Activated naive CD4-positive, alpha-beta T cell treated with anti-CD3 and anti-CD28 coated beads for 36 hours (primary cell): ENCODE measurements at regions of chr10 and their contacts with region 1.

Region 1: DNA sequence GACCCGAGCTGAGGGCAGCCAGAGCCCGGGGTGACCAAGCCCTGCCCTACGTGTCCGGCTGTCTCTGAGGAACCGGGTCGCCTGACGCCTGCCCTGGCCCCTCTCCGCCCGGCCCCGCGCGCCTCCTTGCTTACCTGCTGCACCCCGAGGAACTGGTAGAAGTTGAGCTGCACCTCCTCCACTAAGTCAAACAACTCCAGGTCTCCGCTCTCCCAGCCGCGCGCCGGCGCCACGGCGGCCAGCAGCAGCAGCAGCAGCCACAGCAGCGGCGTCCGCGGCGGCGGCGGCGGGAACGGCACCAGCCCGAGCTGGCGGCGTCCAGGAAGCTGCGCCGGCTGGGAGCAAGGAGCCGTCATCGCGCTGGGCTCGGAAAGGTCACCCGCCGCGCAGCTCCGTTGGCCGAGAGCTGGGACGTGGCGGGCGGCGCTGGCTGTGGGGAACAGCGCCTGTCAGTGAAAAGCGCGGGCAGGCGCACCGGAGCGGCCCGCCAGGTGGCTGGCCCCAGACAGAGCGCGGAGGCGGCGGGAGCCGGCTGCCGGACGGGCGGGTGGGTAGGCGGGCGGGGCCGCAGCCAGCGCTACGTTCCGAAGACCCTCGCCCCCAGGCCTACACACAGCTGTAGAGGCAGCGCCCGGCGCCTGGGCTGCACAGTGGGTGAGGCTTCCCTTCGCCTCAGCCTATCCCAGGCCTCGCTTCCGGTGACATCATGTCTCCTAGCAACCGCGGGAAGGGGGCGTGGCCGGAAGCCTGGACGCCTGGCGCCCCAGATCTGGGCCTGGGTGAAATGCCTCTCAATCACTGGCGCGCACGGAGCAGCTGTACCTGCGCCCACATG is at the start of gene DNAJC1:
- DNase-seq: peak; percentile 99
- H3K4me3 Mint-ChIP-seq: peak within 1 kb of the TSS; percentile 94
- H3K27ac Mint-ChIP-seq: peak within 1 kb of the TSS; percentile 84
- H3K4me1 Mint-ChIP-seq: peaks cover 34% of the 10 kb centered on the region
- H3K27me3 Mint-ChIP-seq: peaks cover 5% of the 10 kb centered on the region
- total RNA-seq, gene DNAJC1: 18.0 to 18.8 TPM

Region 2: DNA sequence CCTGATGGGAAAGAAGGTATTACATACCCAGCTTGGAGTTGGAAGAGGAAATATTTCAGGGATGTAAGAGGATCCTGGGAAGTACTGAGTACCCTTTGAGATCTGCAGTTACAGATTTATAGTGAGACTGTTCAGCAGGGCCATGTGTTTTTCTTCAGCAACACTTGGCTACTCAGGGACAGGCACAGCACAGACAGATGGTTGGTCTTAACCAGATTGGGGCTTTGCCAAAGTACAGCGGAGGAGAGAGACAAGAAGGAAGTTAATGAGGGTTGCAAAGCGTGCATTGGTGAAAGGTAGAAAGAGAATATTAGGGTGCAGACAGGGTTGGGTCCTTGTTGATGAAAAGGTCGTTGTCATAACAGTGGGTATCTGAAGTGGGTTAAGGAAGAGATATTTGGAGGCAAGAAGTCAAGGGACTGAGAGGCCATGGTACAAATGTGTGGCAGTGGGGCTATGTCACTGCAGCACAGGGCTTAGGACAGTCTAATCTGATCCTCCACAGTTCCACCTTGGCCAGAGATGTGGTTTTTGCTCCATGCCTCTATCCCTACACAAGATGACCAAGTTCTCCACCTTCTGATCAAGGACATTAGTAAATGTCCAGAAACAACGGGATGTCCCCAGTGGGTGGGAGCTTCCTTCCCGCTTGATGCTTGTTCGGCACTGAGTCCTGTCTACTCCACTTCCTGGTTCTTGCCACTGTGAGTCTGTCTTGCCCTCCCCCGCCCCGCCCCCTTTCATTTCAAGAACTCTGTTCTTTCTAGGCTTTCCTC is 19.1 kb after region 1 on chr10:
- CTCF ChIA-PET with region 1: no interaction called
- intact Hi-C with region 1: loop called (anchors 1 kb)
- DNase-seq: peak; percentile 78
- H3K4me3 Mint-ChIP-seq: peak overlapping the region; percentile 65
- H3K27ac Mint-ChIP-seq: peak overlapping the region; percentile 80
- H3K4me1 Mint-ChIP-seq: peaks cover 22% of the 10 kb centered on the region
- H3K27me3 Mint-ChIP-seq: peaks cover 3% of the 10 kb centered on the region

Region 3: GRCh38 chr10:22316285-22317120 is 313.2 kb after region 1 on chr10 and contains the start of gene COMMD3:
- CTCF ChIA-PET with region 1: no interaction called
- intact Hi-C with region 1: loop called (anchors 1 kb)
- DNase-seq: peak; percentile 80
- H3K4me3 Mint-ChIP-seq: peak within 1 kb of the TSS; percentile 91
- H3K27ac Mint-ChIP-seq: peak within 1 kb of the TSS; percentile 86
- H3K4me1 Mint-ChIP-seq: peaks cover 30% of the 10 kb centered on the region
- H3K27me3 Mint-ChIP-seq: peaks cover 18% of the 10 kb centered on the region
- total RNA-seq, gene COMMD3: 64.5 to 69.4 TPM

Region 4: GRCh38 chr10:22436884-22437619 is 433.8 kb after region 1 on chr10:
- CTCF ChIA-PET with region 1: no interaction called
- intact Hi-C with region 1: loop called (anchors 1 kb)
- DNase-seq: peak; percentile 84
- H3K4me3 Mint-ChIP-seq: peak overlapping the region; percentile 84
- H3K27ac Mint-ChIP-seq: peak overlapping the region; percentile 92
- H3K4me1 Mint-ChIP-seq: peaks cover 31% of the 10 kb centered on the region
- H3K27me3 Mint-ChIP-seq: no peaks in the 10 kb centered on the region

Region 5: GRCh38 chr10:22714479-22715289 is 711.4 kb after region 1 on chr10 and contains the start of gene PIP4K2A:
- CTCF ChIA-PET with region 1: no interaction called
- intact Hi-C with region 1: loop called (anchors 5 kb)
- DNase-seq: peak; percentile 74
- H3K4me3 Mint-ChIP-seq: peak within 1 kb of the TSS; percentile 88
- H3K27ac Mint-ChIP-seq: peak within 1 kb of the TSS; percentile 79
- H3K4me1 Mint-ChIP-seq: peaks cover 27% of the 10 kb centered on the region
- H3K27me3 Mint-ChIP-seq: no peaks in the 10 kb centered on the region
- total RNA-seq, gene PIP4K2A: 68.0 to 74.1 TPM

Region 6: GRCh38 chr10:23095404-23095965 is 1092.2 kb after region 1 on chr10 and contains the start of gene MSRB2:
- CTCF ChIA-PET with region 1: no interaction called
- intact Hi-C with region 1: loop called (anchors 1 kb)
- DNase-seq: peak; percentile 92
- H3K4me3 Mint-ChIP-seq: peak within 1 kb of the TSS; percentile 97
- H3K27ac Mint-ChIP-seq: peak within 1 kb of the TSS; percentile 90
- H3K4me1 Mint-ChIP-seq: peaks cover 34% of the 10 kb centered on the region
- H3K27me3 Mint-ChIP-seq: no peaks in the 10 kb centered on the region
- total RNA-seq, gene MSRB2: 13.9 to 16.0 TPM